Heart left ventricle (tissue), 16 donors: ENCODE measurements at regions of chr16 and their contacts with region 1.

Region 1: DNA sequence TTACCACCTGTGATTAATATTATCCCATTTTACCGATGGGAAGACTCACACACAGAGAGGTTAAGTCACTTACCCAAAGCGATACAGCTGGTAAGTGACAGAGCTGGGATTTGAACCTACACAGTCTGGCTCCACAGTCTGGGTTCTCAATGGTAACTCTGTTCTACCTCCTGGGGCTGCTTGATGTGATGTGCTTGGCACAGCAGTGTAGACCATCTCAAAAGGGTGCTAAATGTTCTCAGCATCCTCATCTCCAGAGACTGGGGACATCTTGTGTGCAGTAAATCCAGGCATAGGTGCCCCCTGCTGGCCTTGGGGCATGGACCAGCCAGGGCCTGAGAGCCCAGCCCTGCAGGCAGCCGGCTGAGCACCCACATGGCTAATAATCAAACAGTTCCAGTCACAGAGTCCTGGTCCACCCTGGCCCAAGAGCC is 15.4 kb upstream of the KATNB1 start:
- DNase-seq: peak in 4 of 5 donors; percentile 42 to 52 (median 50)
- ATAC-seq: peak in 3 of 4 donors; percentile 75 to 87 (median 76)
- H3K4me3 ChIP-seq: no peak overlapping the region
- H3K27ac ChIP-seq: no peak overlapping the region
- H3K4me1 ChIP-seq: no peaks in the 10 kb centered on the region
- H3K27me3 ChIP-seq: peaks cover 0 to 5% (median 0%) of the 10 kb centered on the region in 9 donors
- CTCF ChIP-seq: peak; percentile 43 to 61 (median 54)
- POLR2A ChIP-seq: no peak

Region 2: DNA sequence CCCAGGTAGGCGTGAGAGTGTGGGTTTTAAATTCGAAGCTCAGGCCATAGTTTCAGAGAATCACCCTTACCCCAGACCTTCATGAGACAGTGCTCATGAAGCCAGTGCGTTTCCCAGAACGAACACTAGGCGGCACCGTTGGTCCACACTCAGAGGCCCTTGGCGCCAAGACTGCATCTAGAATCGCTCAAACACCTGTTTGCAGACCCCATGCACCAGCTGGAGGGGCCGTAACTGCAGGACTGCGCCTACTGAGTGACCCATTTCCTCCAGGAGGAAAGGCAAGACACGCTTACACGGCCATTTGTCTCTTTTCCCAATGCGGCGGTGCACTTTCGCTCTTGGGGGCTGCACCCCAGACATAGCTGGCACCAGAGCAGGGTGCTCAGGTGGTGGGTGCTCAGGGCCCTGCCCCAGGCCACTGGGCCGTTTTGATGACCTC is 143.7 kb before region 1 on chr16:
- intact Hi-C with region 1: loop called in 8 of 10 experiments (anchors 1 to 5 kb)
- DNase-seq: peak; percentile 56 to 83 (median 68)
- ATAC-seq: peak; percentile 56 to 81 (median 78)
- H3K4me3 ChIP-seq: no peak overlapping the region
- H3K27ac ChIP-seq: peak overlapping the region in 1 of 12 donors; percentile 75
- H3K4me1 ChIP-seq: peaks cover 0 to 4% (median 0%) of the 10 kb centered on the region in 12 donors
- H3K27me3 ChIP-seq: peaks cover 0 to 17% (median 0%) of the 10 kb centered on the region in 9 donors
- CTCF ChIP-seq: peak; percentile 86 to 96 (median 93)
- POLR2A ChIP-seq: no peak

Region 3: DNA sequence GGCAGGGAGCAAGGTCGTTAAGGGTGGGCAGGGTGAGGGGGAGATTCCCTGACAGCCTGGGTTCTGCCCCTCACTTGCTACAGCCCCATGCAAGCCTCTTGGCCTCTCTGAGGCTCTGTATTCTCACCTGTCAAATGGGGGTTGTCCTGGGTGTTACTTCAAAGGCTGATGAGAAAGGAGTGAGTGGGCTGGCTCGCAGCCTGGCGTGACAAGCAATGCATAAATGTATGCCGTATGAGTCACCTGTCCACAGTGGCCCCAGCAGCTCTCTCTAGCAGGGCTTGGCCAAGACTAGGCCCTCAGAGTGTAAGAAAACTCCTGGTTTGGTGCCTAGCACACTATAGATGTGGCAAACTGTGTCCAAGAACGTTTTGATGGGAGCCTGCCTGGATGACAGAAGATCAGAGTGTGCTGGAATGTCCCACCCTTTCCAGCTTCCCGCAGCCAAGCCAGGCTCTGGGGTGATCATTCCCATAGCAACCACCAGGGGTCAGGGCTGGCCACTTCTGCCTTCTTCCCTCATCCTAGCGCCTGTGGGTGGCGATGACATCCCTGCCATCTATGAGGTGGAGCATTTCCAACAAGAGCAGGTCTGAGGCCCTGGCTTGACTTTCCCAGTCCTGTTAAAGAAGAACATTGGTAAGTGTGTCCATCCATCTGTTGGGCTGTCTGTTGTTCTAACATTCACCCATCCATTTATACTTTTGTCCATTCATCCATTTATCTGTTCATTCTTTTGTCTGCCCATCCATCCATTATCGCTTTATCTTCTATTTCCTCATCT is 128.9 kb before region 1 on chr16:
- intact Hi-C with region 1: loop called (anchors 5 kb)
- DNase-seq: peak; percentile 70 to 81 (median 71)
- ATAC-seq: peak; percentile 90 to 97 (median 94)
- H3K4me3 ChIP-seq: no peak overlapping the region
- H3K27ac ChIP-seq: peak overlapping the region in 1 of 12 donors; percentile 3
- H3K4me1 ChIP-seq: peaks cover 0 to 25% (median 6%) of the 10 kb centered on the region in 12 donors
- H3K27me3 ChIP-seq: peaks cover 0 to 7% (median 0%) of the 10 kb centered on the region in 9 donors
- CTCF ChIP-seq: peak; percentile 83 to 95 (median 88)
- POLR2A ChIP-seq: no peak

Region 4: GRCh38 chr16:57653936-57654335 is 66.2 kb before region 1 on chr16:
- intact Hi-C with region 1: loop called in 5 of 10 experiments (anchors 5 to 10 kb)
- DNase-seq: peak in 1 of 5 donors; percentile 48
- ATAC-seq: peak in 1 of 4 donors; percentile 76
- H3K4me3 ChIP-seq: no peak overlapping the region
- H3K27ac ChIP-seq: peak overlapping the region in 3 of 12 donors; percentile 18 to 54 (median 34)
- H3K4me1 ChIP-seq: peaks cover 0 to 10% (median 0%) of the 10 kb centered on the region in 12 donors
- H3K27me3 ChIP-seq: no peaks in the 10 kb centered on the region
- CTCF ChIP-seq: no peak
- POLR2A ChIP-seq: no peak

Region 5: GRCh38 chr16:57658878-57659674 is 61.1 kb before region 1 on chr16:
- intact Hi-C with region 1: loop called in 4 of 10 experiments (anchors 5 to 10 kb)
- DNase-seq: no peak
- ATAC-seq: no peak
- H3K4me3 ChIP-seq: no peak overlapping the region
- H3K27ac ChIP-seq: no peak overlapping the region
- H3K4me1 ChIP-seq: no peaks in the 10 kb centered on the region
- H3K27me3 ChIP-seq: no peaks in the 10 kb centered on the region
- CTCF ChIP-seq: no peak
- POLR2A ChIP-seq: no peak

Region 6: GRCh38 chr16:57669476-57670162 is 50.5 kb before region 1 on chr16:
- intact Hi-C with region 1: loop called in 2 of 10 experiments (anchors 5 kb)
- DNase-seq: peak in 2 of 5 donors; percentile 17 to 39
- ATAC-seq: no peak
- H3K4me3 ChIP-seq: no peak overlapping the region
- H3K27ac ChIP-seq: no peak overlapping the region
- H3K4me1 ChIP-seq: peaks cover 0 to 17% (median 0%) of the 10 kb centered on the region in 12 donors
- H3K27me3 ChIP-seq: peaks cover 0 to 4% (median 0%) of the 10 kb centered on the region in 9 donors
- CTCF ChIP-seq: no peak
- POLR2A ChIP-seq: no peak